WTC11 (cell line): ENCODE measurements at regions of chr11 and their contacts with region 1.

Region 1: DNA sequence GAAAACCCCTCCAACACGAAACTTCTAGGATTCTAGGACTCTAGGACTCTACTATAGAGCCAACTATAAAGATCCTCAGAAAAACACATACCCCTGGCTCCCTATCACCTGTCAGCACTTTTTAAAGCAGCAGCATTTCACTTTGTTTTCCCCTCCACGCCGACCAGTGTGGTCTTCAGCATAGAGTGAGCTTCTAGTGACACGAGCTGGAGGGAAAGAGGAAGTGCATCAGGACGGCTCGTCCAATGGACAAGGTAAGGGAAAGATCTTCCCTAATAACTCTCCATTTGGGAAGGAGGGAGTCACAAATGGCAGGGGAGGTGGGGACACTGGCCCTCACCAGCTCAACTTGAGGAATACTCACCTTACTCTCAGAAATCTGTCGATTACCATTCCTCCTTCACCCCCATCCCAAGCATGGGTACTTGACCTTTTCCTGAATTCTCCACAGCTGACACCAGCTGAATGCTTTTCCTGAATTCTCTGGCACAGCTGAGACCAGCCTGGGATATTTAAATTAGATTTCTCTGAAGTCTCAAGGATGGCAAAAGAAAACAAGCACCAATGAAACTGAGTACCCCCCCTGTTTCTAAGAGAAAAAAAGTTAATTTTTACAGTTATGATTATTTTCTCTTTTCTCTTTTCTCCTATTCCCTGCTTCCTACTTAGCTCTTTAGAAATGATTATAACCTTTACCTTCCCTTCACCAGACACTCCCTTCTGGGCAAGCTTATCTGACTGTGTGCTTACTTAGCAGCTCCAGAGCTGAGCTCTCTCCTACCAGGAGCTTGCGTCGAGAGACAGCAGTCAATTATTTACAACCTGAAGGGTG is 33.3 kb upstream of the NNMT start:
- DNase-seq: peak; percentile 34
- ATAC-seq: peak; percentile 74
- H3K4me3 Mint-ChIP-seq: no peak overlapping the region
- H3K27ac Mint-ChIP-seq: no peak overlapping the region
- H3K4me1 Mint-ChIP-seq: no peaks in the 10 kb centered on the region
- H3K27me3 Mint-ChIP-seq: no peaks in the 10 kb centered on the region
- CTCF ChIP-seq: no peak

Region 2: GRCh38 chr11:113974741-113975470 is 288.0 kb before region 1 on chr11 and contains the start of gene HTR3A:
- CTCF ChIA-PET with region 1: interaction called, 15 read pairs
- POLR2A ChIA-PET with region 1: no interaction called
- DNase-seq: peak; percentile 63
- ATAC-seq: peak; percentile 90
- H3K4me3 Mint-ChIP-seq: peak within 1 kb of the TSS; percentile 50
- H3K27ac Mint-ChIP-seq: no peak within 1 kb of the TSS; the same call in 1 of the 2 replicates
- H3K4me1 Mint-ChIP-seq: peaks cover 30% of the 10 kb centered on the region
- H3K27me3 Mint-ChIP-seq: peaks cover 9% of the 10 kb centered on the region; the same call in 1 of the 2 replicates
- CTCF ChIP-seq: no peak
- total RNA-seq, gene HTR3A: 4.1 to 6.0 TPM (median 5.0 TPM) in 3 replicates

Region 3: DNA sequence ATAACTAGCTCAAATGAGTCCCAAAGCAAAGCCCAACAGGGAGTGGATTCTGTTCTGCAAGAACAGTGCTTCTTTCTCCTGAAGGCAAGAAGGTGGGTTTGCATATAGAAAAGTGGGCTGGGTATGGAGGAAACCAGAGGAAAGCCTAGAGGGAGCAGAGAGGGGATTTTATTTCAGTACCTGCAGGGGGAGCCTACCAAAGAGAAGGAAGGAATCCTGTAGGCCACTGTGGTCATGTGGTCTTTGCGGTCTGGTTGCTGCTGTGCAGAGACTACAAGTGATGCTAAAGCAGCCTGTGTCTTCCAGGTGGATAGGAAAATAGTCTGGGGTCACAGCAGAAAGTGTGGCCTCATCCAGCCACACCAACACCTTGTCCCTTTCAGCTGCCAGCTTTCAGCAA is 236.5 kb before region 1 on chr11:
- CTCF ChIA-PET with region 1: interaction called, 47 read pairs
- POLR2A ChIA-PET with region 1: no interaction called
- DNase-seq: peak; percentile 18
- ATAC-seq: peak; percentile 100
- H3K4me3 Mint-ChIP-seq: no peak overlapping the region
- H3K27ac Mint-ChIP-seq: no peak overlapping the region
- H3K4me1 Mint-ChIP-seq: peaks cover 4% of the 10 kb centered on the region; the same call in 1 of the 2 replicates
- H3K27me3 Mint-ChIP-seq: no peaks in the 10 kb centered on the region; the same call in none of the 2 replicates
- CTCF ChIP-seq: no peak

Region 4: GRCh38 chr11:114180301-114181055 is 82.4 kb before region 1 on chr11:
- CTCF ChIA-PET with region 1: interaction called, 10 read pairs
- POLR2A ChIA-PET with region 1: no interaction called
- DNase-seq: peak; percentile 59
- ATAC-seq: peak; percentile 95
- H3K4me3 Mint-ChIP-seq: no peak overlapping the region
- H3K27ac Mint-ChIP-seq: no peak overlapping the region
- H3K4me1 Mint-ChIP-seq: peaks cover 8% of the 10 kb centered on the region
- H3K27me3 Mint-ChIP-seq: no peaks in the 10 kb centered on the region
- CTCF ChIP-seq: 0 out of 2 replicates have a peak, but pooled peaks have one; percentile 9

Region 5: DNA sequence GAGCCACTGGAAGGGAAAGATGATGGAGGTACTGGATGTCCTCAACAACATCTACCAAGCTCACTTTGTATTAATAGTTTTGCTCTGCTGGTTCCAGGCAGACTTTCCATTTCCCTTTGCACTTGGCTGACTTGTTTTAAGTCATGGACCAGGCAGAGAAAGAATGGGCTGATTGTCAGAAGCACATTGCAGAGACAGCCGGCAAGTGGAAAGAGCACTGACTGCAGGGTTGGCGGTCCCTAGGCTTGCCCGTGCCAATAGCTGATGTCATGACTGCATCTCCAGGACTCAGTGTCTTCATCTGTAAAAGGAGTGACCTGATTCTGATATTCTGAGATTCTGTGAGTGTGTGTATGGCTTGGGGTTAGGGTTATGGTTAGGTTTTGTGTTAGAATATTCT is 12.4 kb after region 1 on chr11:
- CTCF ChIA-PET with region 1: interaction called, 12 read pairs
- POLR2A ChIA-PET with region 1: no interaction called
- DNase-seq: no peak
- ATAC-seq: no peak
- H3K4me3 Mint-ChIP-seq: no peak overlapping the region
- H3K27ac Mint-ChIP-seq: no peak overlapping the region
- H3K4me1 Mint-ChIP-seq: no peaks in the 10 kb centered on the region
- H3K27me3 Mint-ChIP-seq: peaks cover 11% of the 10 kb centered on the region
- CTCF ChIP-seq: no peak